ENCODE measurements at regions of chr2 and their contacts with region 1.

Region 1: GRCh38 chr2:240851078-240851991 is 17.3 kb upstream of the AGXT start:
- DNase-seq: peak; percentile 64 to 91
- H3K4me3 ChIP-seq: no peak overlapping the region
- H3K27ac ChIP-seq: no peak overlapping the region
- H3K4me1 ChIP-seq: no peaks in the 10 kb centered on the region
- H3K27me3 ChIP-seq: no peaks in the 10 kb centered on the region
- CTCF ChIP-seq: peak; percentile 97

Region 2: DNA sequence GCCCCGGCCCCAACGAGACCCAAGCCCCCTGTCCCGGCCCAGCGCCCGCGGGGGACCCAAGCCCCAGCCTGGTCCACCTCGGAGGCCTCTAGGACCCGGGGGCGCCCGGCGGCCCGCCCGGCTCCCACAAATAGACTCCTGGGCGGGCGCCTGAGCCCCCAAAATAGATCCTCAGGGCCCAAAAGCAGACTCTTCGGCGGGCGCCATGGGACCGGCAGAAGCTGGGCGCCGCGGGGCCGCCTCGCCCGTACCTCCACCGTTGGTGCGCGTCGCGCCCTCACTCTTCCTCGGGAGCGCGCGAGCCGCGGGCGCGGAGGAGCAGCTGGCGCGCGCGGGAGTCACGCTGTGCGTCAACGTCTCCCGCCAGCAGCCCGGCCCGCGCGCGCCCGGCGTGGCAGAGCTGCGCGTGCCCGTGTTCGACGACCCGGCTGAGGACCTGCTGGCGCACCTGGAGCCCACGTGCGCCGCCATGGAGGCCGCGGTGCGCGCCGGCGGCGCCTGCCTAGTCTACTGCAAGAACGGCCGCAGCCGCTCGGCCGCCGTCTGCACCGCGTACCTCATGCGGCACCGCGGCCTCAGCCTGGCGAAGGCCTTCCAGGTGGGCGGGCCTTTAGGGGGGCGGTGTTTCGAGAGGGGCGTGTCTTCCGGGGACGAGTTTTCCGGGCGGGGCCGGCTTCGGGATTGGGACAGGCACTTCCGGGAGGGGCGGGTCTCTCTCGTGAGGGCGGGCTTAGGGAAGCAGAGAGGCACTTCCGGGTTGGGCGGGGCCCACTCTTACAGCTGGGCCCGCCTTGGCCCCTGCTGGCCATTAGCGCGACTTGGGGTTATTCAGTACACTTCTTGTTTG is 290.6 kb before region 1 on chr2:
- CTCF ChIA-PET with region 1: no interaction called
- POLR2A ChIA-PET with region 1: no interaction called
- intact Hi-C with region 1: no loop called
- DNase-seq: peak; percentile 94 to 100
- H3K4me3 ChIP-seq: peak overlapping the region; percentile 75
- H3K27ac ChIP-seq: peak overlapping the region; percentile 95
- H3K4me1 ChIP-seq: peaks cover 55% of the 10 kb centered on the region
- H3K27me3 ChIP-seq: no peaks in the 10 kb centered on the region
- CTCF ChIP-seq: no peak

Region 3: DNA sequence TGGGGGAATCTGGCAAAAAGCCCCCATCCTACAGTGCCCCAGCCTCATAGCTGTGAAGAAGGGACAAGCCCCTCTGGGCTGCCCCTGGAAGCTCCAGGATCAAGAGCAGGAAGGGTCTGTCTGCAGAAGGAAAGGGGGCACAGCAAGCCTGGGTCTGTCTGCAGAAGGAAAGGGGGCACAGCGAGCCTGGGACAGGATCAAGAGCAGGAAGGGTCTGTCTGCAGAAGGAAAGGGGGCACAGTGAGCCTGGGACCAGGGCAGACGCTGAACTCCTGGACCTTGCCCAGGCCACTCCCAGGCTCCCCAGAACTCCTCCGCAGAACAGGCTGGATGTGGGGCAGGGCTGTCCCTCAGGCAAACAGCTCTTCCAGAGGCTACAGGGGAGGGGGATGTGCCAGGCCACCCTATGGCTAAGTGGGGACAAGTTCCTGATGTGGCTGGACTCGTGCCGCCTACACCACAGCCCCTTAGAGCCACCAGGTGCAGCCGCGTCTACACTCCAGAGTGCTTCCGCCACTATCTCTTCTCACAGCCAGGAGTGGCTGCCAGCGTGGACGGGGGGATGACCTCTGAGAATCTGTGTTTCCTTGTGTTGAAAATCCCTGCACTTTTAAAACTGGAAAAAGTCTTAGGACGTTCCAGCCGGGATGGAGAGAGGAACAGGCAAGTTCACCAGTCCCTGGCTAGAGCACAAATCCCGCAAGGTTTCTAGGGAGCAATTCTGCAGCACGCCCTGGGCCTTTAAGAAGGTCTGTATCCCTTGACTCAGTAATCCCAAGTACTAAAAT is 52.1 kb before region 1 on chr2:
- CTCF ChIA-PET with region 1: no interaction called
- POLR2A ChIA-PET with region 1: no interaction called
- intact Hi-C with region 1: no loop called
- DNase-seq: no peak
- H3K4me3 ChIP-seq: no peak overlapping the region
- H3K27ac ChIP-seq: no peak overlapping the region
- H3K4me1 ChIP-seq: no peaks in the 10 kb centered on the region
- H3K27me3 ChIP-seq: peaks cover 100% of the 10 kb centered on the region
- CTCF ChIP-seq: no peak

Region 4: DNA sequence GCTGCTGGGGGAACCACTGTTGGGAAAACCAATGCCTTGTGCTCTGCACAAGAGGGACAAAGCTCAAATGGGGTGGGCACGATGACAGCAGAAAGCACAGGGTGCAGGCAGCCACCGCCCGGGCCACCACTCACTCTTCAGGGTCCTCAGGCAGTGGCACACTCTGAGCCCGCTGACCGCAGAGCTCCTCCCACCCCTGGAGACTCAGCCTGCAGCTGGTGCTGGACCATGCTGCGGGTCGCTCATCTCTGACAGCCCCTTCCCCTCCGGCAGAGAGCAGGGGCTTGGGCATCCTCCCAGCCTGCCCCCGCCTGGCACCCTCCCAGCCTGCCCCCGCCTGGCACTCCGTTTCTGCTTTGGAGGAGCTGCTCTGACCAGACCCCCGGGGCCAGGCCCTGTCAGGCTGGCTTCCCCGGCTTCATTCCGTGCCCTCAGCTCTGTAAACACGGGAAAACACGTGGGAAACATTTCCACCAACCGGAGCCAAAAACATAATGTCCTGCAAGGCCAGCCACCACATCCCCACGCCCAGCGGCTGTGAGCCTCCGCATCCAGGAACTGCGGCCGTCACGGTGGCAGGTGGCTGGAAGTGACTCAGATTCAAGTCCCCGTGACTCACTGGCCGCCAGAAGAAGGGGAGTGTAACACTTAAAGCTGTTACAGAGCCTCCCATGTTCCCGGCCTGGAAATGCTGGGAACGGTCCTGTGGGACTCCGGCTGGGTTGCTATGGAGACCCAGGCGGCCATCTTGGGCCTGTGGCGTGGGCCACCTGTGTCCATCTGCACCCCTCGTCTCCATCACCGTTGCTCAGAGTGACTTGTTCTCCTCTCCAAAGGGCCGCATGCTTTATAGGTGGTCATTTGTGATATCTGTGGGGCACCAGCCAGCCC is 140.3 kb after region 1 on chr2:
- CTCF ChIA-PET with region 1: no interaction called
- POLR2A ChIA-PET with region 1: no interaction called
- intact Hi-C with region 1: loop called (anchors 1 kb)
- DNase-seq: peak; percentile 95 to 96
- H3K4me3 ChIP-seq: no peak overlapping the region
- H3K27ac ChIP-seq: peak overlapping the region; percentile 18; the same call in 1 of the 2 replicates
- H3K4me1 ChIP-seq: peaks cover 27% of the 10 kb centered on the region
- H3K27me3 ChIP-seq: no peaks in the 10 kb centered on the region
- CTCF ChIP-seq: no peak

Region 5: DNA sequence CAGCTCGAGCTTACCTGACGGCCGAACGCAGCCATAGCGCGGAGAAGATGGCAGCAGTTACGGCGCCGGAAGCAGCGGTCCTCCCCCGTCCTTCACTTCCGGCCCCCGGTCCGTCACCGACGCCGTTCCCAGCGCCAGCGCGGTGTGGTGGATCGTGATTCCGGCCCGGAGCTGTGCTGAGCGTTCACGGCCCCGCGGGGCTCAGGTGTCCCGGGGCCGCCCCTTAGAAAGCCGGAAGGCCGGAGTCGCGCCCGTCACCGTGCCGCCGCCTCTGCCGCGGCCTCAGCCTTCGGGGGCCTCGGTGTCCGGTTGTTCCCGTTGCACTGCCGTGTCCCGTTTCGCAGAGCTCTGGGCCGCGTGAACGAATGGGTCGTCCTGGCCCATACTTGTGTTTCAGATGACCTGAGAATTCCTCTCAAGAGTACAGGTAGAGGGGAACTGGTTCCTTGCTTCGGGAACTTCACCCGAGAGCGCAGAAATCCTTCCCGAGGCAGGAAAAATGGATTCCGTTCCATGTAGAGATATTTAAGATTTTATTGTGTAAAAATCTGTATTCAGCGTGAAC is 251.0 kb after region 1 on chr2 and contains the start of gene MTERF4:
- CTCF ChIA-PET with region 1: no interaction called
- POLR2A ChIA-PET with region 1: no interaction called
- intact Hi-C with region 1: loop called (anchors 10 kb)
- DNase-seq: peak; percentile 84 to 96
- H3K4me3 ChIP-seq: peak within 1 kb of the TSS; percentile 83
- H3K27ac ChIP-seq: peak within 1 kb of the TSS; percentile 66
- H3K4me1 ChIP-seq: peaks cover 10% of the 10 kb centered on the region
- H3K27me3 ChIP-seq: no peaks in the 10 kb centered on the region
- CTCF ChIP-seq: no peak
- total RNA-seq, gene MTERF4: 38.6 and 42.8 TPM in 2 replicates

Region 6: DNA sequence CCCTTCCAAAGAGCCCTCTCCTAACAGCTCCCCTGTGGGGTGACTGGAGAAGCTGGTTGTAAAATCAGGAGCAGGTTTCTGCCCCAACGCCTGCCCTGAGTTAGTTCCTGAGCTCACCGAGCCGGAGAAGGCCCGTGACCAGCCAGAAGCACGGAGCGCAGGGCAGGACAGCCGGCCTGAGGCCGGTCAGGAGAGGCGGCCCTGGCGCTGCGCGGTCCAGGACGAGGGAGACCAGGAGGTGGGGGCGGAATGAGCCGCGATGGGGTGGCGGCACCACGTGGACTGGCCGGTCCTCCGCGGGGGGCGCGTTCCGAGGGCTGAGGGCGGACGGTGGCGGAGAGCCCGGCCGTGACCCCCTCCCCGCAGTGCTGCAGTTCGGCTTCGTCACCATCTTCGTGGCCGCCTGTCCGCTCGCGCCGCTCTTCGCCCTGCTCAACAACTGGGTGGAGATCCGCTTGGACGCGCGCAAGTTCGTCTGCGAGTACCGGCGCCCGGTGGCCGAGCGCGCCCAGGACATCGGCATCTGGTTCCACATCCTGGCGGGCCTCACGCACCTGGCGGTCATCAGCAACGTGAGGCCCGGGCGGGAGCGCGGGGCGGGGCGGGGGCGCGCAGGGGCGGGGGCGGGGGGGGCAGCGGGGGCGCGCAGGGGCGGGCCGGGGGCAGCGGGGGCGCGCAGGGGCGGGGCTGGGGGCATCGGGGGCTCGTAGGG is 366.1 kb after region 1 on chr2:
- CTCF ChIA-PET with region 1: no interaction called
- POLR2A ChIA-PET with region 1: no interaction called
- intact Hi-C with region 1: loop called (anchors 5 kb)
- DNase-seq: peak; percentile 63 to 86
- H3K4me3 ChIP-seq: peak overlapping the region; percentile 47; the same call in 1 of the 2 replicates
- H3K27ac ChIP-seq: no peak overlapping the region
- H3K4me1 ChIP-seq: peaks cover 11% of the 10 kb centered on the region
- H3K27me3 ChIP-seq: peaks cover 15% of the 10 kb centered on the region
- CTCF ChIP-seq: no peak

Region 7: GRCh38 chr2:241234962-241235740 is 383.8 kb after region 1 on chr2:
- CTCF ChIA-PET with region 1: no interaction called
- POLR2A ChIA-PET with region 1: no interaction called
- intact Hi-C with region 1: no loop called
- DNase-seq: no peak
- H3K4me3 ChIP-seq: no peak overlapping the region
- H3K27ac ChIP-seq: no peak overlapping the region
- H3K4me1 ChIP-seq: no peaks in the 10 kb centered on the region
- H3K27me3 ChIP-seq: no peaks in the 10 kb centered on the region
- CTCF ChIP-seq: no peak

Region 8: GRCh38 chr2:241659150-241659739 is 807.9 kb after region 1 on chr2:
- CTCF ChIA-PET with region 1: no interaction called
- POLR2A ChIA-PET with region 1: no interaction called
- intact Hi-C with region 1: loop called (anchors 2 kb)
- DNase-seq: peak in 1 of 2 experiments; percentile 50
- H3K4me3 ChIP-seq: no peak overlapping the region
- H3K27ac ChIP-seq: no peak overlapping the region
- H3K4me1 ChIP-seq: no peaks in the 10 kb centered on the region
- H3K27me3 ChIP-seq: no peaks in the 10 kb centered on the region
- CTCF ChIP-seq: peak; percentile 67

Measured in PC-9 (cell line).